ENCODE measurements at regions of chr14 and their contacts with region 1.

Region 1: DNA sequence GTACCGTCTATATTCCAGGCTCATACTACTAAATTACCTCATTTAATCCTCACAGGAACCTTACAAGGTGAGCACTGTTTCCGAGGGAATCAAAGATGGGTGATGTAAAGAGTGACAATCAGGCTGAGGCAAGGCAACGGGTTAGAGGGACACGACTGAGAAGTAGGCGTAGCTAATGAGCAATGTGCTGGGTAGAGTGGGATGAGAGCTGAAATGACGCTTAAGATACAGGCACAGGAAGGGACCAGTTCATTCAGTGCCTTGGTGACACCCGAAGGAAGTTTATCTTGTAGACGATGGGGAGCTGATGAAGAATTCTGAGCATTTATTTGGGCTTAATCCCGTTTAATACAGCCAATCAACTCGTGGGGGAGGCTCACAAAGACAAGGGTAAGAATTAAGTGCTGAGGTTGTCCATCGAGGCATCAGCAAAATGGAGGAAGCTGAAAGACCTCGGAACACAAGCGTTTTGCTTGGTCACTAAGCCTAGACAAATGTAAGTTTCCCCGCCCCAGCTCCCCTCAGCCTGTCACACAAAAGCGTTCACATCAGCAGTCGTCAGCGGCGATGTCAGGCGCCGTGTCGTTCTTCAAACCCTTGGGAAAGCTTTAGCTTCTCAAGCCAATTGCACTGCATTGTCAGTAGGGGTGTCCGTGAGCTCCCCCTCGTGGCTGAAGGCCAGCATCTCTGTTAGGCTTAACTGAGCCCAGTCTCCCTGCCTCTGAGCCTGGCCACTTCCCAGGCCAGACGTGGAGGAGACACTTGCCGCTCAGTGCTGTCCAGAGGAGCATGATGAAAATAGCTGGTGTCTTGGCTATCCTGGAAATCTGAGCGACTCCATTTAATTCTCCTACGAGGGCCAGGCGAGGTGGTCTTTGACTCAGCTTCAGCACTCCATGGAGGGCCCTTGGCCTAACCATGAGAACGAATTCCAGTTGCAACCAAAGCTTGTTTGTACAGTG is 288.5 kb upstream of the G2E3 start:
- DNase-seq: no peak
- H3K4me3 ChIP-seq: peak overlapping the region; percentile 47
- CTCF ChIP-seq: peak; percentile 91

Region 2: GRCh38 chr14:28756884-28757570 is 1513.5 kb before region 1 on chr14:
- CTCF ChIA-PET with region 1: interaction called, 19 read pairs
- POLR2A ChIA-PET with region 1: no interaction called
- DNase-seq: no peak
- H3K4me3 ChIP-seq: no peak overlapping the region
- CTCF ChIP-seq: peak; percentile 65

Region 3: GRCh38 chr14:30214461-30215090 is 55.9 kb before region 1 on chr14:
- CTCF ChIA-PET with region 1: interaction called, 19 read pairs
- POLR2A ChIA-PET with region 1: no interaction called
- DNase-seq: no peak
- H3K4me3 ChIP-seq: no peak overlapping the region
- CTCF ChIP-seq: peak; percentile 49

Region 4: DNA sequence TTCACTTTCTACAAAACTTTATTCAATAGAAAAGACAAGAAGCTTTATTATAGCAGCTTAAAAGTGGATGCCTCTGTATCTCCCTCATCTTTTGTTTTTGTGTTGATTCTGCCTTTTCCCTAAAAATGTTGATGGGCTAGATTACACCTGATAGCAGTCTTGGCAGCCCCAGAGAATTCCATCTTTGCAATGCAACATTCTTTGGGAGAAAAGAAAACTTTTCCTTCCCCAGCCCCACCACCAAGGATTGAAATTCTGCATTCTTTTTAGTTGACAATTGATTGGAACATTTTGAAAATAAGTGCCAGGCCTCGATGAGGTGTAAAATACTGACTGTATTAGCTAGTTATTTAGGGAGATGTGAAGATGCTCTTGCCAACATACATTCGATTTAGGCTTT is 18.3 kb before region 1 on chr14:
- CTCF ChIA-PET with region 1: interaction called, 62 read pairs
- POLR2A ChIA-PET with region 1: no interaction called
- DNase-seq: no peak
- H3K4me3 ChIP-seq: no peak overlapping the region
- CTCF ChIP-seq: no peak

Region 5: DNA sequence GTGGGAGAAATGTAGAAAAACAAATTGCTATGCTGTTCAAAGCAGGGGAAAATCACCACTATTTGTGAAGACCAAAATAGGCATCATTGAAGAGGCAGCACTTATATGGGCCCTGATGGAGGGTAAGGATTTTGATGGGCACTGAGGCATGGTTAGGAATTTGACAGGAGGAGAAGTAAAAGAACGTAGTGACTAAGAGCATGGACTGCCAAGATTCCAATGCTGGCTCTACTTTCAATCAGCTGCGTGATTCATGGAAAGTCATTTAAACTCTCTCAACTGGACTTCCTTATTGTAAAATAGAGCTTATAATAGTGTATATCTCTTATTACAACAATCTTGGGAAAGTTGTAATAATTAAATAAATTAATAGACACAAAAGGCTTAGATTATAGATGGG is 20.7 kb after region 1 on chr14:
- CTCF ChIA-PET with region 1: interaction called, 169 read pairs
- POLR2A ChIA-PET with region 1: no interaction called
- DNase-seq: no peak
- H3K4me3 ChIP-seq: no peak overlapping the region
- CTCF ChIP-seq: no peak